HCT116 (cell line): ENCODE measurements at regions of chr3 and their contacts with region 1.

Region 1: DNA sequence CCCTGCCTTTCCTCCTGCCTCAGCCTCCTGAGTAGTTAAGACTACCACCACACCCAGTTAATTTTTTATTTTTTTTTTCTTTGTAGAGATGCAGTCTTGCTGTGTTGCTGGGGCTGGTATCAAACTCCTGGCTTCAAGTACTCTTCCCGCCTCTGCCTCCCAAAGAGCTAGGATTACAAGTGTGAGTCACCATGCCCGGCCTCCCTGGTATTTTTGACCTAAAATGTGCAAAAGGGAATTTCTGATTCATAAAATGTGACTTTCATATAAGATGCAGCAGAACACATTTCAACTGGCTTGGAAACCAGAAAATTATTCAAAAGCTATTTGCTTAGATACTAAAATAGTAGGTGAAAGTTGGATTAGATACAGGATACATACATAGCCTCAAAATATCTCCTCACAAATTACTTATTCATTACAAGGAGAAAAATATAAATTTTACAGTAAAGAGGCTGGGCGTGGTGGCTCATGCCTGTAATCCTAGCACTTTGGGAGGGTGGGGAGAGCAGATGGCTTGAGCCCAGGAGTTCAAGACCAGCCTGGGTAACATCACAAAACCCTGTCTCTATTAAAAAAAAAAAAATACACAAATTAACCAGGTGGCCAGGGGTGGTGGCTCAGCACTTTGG is 32.0 kb downstream of the MAP4 start:
- DNase-seq: peak; percentile 42
- ATAC-seq: peak; percentile 90
- H3K4me3 ChIP-seq: peak overlapping the region in 1 of 2 experiments; percentile 13; a peak in 1 of 4 replicates
- H3K27ac ChIP-seq: peak overlapping the region; percentile 76
- H3K4me1 ChIP-seq: peaks cover 19 to 21% of the 10 kb centered on the region in 2 experiments
- H3K27me3 ChIP-seq: no peaks in the 10 kb centered on the region
- CTCF ChIP-seq: no peak
- POLR2A ChIP-seq: no peak
- RAD21 ChIP-seq: no peak

Region 2: DNA sequence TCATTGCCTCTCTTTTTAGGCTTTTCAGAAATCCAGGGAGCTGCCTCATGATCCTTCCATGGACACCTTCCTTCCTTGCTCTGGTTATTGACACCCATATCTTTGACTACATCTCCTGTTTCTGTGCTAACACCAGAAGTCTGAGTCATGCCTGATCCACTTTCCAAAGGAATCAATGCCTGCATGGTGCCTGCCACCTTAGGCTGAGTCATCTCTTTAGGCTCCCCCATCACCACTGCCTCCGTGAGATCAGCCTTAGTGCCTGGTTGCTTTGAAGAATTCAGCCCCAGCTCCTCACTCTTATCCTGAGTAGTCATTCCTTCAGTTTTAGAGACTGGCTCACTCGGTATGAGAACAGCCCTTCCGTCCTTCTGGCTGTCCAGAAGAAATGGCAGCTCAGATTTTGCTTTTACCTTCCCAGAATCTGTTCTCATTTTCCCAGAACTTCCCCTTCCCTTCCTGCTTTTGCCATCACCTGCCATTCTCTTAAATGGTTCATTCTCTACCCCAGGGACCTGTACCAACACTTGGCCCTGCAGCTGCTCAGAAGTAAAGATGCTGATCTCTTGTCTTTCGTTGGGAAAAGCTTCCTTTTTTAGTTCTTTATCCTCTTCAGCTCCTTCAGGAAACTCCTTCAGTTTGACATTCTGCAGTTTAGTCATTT is 73.3 kb before region 1 on chr3:
- CTCF ChIA-PET with region 1: no interaction called
- POLR2A ChIA-PET with region 1: no interaction called
- RAD21 ChIA-PET with region 1: no interaction called
- intact Hi-C with region 1: loop called (anchors 5 kb)
- DNase-seq: peak; percentile 81
- ATAC-seq: peak; percentile 99
- H3K4me3 ChIP-seq: peak overlapping the region in 1 of 2 experiments; percentile 1; a peak in 1 of 4 replicates
- H3K27ac ChIP-seq: peak overlapping the region; percentile 69
- H3K4me1 ChIP-seq: peaks cover 15 to 36% of the 10 kb centered on the region in 2 experiments
- H3K27me3 ChIP-seq: no peaks in the 10 kb centered on the region
- CTCF ChIP-seq: no peak
- POLR2A ChIP-seq: no peak
- RAD21 ChIP-seq: no peak